PC-9 (cell line): ENCODE measurements at regions of chr14 and their contacts with region 1.

Region 1: GRCh38 chr14:101761032-101761880 is at the start of gene PPP2R5C:
- DNase-seq: peak; percentile 84 to 96
- H3K4me3 ChIP-seq: peak within 1 kb of the TSS; percentile 99
- H3K27ac ChIP-seq: peak within 1 kb of the TSS; percentile 83
- H3K4me1 ChIP-seq: peaks cover 23% of the 10 kb centered on the region
- H3K27me3 ChIP-seq: no peaks in the 10 kb centered on the region
- CTCF ChIP-seq: no peak
- total RNA-seq, gene PPP2R5C: 301 and 401 TPM in 2 replicates

Region 2: GRCh38 chr14:101731187-101732080 is 29.8 kb before region 1 on chr14:
- CTCF ChIA-PET with region 1: interaction called, 8 read pairs
- POLR2A ChIA-PET with region 1: interaction called, 44 read pairs
- intact Hi-C with region 1: loop called (anchors 1 kb)
- DNase-seq: peak; percentile 98 to 100
- H3K4me3 ChIP-seq: peak overlapping the region; percentile 54
- H3K27ac ChIP-seq: peak overlapping the region; percentile 92
- H3K4me1 ChIP-seq: peaks cover 50% of the 10 kb centered on the region
- H3K27me3 ChIP-seq: no peaks in the 10 kb centered on the region
- CTCF ChIP-seq: no peak

Region 3: DNA sequence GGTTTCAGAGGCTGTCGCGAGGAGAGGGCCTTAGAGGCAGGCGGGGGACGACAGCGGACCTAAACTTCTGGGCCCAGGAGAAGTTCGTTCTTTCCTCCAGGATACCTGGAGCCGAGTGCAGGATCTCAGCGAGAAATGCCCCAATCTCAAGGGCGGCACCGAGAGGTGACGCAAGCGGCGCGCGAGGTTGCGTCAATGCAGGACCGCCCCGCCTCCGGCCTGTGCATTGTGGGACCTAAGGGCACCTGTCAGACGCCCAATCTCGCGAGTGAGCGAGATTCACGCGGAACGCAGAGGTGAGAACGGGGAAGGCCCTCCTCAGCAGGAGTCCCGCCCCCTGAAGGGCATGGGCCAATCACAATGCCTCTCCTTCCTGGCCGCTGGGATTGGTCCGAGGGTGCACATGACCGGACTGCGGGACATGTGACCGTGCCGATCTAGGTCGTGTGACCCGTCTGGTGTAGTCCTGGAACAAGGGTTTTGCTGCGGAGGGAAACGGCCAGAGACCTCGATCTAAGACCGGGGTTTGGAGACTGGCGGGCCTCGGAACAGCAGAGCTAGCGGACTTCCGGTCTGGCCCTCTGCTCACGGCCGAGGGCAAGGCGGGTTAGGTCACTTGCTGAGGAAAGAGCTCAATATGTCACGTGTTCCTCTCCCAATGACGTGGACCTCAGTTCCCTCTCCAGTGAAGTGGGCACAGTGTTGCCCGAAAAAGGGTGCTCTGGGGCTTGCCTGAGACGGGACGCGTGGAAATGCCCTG is 186.8 kb after region 1 on chr14:
- CTCF ChIA-PET with region 1: no interaction called
- POLR2A ChIA-PET with region 1: no interaction called
- intact Hi-C with region 1: loop called (anchors 1 kb)
- DNase-seq: peak; percentile 100
- H3K4me3 ChIP-seq: peak overlapping the region; percentile 83
- H3K27ac ChIP-seq: peak overlapping the region; percentile 93
- H3K4me1 ChIP-seq: peaks cover 20% of the 10 kb centered on the region
- H3K27me3 ChIP-seq: no peaks in the 10 kb centered on the region
- CTCF ChIP-seq: no peak

Region 4: DNA sequence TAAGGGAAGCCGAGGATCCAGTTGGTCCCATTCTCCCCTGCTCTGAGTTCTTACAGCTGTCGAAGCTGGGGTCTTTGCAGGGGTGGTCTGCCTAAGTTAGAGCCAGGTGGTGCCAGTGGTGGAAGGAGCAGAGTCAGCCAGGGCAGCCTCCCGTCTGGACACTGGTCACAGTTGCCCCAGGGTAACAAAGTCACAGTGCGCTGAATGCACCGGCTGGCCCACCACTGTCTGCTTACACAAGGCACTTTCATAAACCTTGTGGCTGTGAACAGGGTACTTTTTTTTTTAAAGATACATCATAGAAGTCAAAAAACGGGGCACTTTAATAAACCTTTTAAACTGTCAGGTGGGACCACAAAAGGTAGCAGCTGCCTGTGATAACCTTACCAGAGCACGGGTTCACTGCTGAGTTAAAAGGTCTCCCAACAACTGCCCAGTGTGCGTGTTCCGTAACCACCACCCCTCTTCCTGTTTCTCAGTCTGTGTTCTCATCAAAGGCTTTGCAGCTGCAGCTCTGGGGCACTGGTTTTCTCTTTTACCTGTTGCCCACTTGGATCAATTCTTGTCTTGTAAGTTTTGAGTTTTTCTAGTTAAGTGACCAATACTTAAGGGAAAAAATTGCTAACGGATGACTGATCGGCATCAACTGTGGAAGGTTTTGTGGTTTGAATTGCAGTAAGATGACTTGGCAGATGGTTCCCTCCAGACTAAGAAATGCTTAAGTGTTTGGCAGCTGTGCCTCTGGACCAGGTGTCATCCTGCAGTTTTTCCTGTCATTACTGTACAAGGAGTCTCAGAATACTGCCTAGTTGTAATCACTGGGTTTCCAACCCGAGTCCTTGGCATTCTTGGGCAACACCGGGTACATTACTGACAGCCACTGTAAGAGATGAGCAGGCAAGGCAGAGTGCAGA is 259.1 kb after region 1 on chr14:
- CTCF ChIA-PET with region 1: no interaction called
- POLR2A ChIA-PET with region 1: interaction called, 11 read pairs
- intact Hi-C with region 1: no loop called
- DNase-seq: peak; percentile 49 to 99
- H3K4me3 ChIP-seq: no peak overlapping the region
- H3K27ac ChIP-seq: peak overlapping the region; percentile 63
- H3K4me1 ChIP-seq: peaks cover 30% of the 10 kb centered on the region
- H3K27me3 ChIP-seq: no peaks in the 10 kb centered on the region
- CTCF ChIP-seq: no peak

Region 5: GRCh38 chr14:102479777-102480176 is 718.5 kb after region 1 on chr14:
- CTCF ChIA-PET with region 1: no interaction called
- POLR2A ChIA-PET with region 1: interaction called, 12 read pairs
- intact Hi-C with region 1: no loop called
- DNase-seq: no peak
- H3K4me3 ChIP-seq: no peak overlapping the region
- H3K27ac ChIP-seq: no peak overlapping the region
- H3K4me1 ChIP-seq: peaks cover 19% of the 10 kb centered on the region
- H3K27me3 ChIP-seq: no peaks in the 10 kb centered on the region
- CTCF ChIP-seq: no peak